Activated naive CD4-positive, alpha-beta T cell treated with anti-CD3 and anti-CD28 coated beads for 36 hours (primary cell): ENCODE measurements at regions of chr19 and their contacts with region 1.

Region 1: GRCh38 chr19:18419195-18419698 is at the start of gene SSBP4:
- DNase-seq: peak; percentile 64
- H3K4me3 Mint-ChIP-seq: peak within 1 kb of the TSS; percentile 82
- H3K27ac Mint-ChIP-seq: peak within 1 kb of the TSS; percentile 56
- H3K4me1 Mint-ChIP-seq: peaks cover 73% of the 10 kb centered on the region
- H3K27me3 Mint-ChIP-seq: peaks cover 32% of the 10 kb centered on the region
- total RNA-seq, gene SSBP4: 62.6 to 71.4 TPM

Region 2: DNA sequence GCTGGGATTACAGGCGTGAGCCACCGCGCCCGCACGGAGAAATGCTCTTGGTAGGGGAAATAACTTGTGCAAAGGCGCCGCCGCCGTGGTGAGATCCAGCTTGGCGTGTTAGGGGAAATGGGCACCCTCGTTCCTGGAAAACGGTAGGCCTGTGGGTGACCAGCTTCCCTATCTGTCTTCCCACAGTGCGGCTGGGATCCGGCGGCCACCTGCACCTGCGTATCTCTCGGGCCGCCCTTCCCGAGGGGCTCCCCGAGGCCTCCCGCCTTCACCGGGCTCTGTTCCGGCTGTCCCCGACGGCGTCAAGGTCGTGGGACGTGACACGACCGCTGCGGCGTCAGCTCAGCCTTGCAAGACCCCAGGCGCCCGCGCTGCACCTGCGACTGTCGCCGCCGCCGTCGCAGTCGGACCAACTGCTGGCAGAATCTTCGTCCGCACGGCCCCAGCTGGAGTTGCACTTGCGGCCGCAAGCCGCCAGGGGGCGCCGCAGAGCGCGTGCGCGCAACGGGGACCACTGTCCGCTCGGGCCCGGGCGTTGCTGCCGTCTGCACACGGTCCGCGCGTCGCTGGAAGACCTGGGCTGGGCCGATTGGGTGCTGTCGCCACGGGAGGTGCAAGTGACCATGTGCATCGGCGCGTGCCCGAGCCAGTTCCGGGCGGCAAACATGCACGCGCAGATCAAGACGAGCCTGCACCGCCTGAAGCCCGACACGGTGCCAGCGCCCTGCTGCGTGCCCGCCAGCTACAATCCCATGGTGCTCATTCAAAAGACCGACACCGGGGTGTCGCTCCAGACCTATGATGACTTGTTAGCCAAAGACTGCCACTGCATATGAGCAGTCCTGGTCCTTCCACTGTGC is 30.9 kb before region 1 on chr19:
- CTCF ChIA-PET with region 1: interaction called, 103 read pairs
- intact Hi-C with region 1: no loop called
- DNase-seq: peak; percentile 78
- H3K4me3 Mint-ChIP-seq: peak overlapping the region; percentile 60
- H3K27ac Mint-ChIP-seq: no peak overlapping the region
- H3K4me1 Mint-ChIP-seq: no peaks in the 10 kb centered on the region
- H3K27me3 Mint-ChIP-seq: peaks cover 32% of the 10 kb centered on the region